Gastrocnemius medialis (tissue), 4 donors: ENCODE measurements at regions of chr12 and their contacts with region 1.

Region 1: GRCh38 chr12:122413516-122414404 is 8.7 kb downstream of the CLIP1 start:
- DNase-seq: no peak
- ATAC-seq: peak; percentile 48 to 80
- H3K4me3 ChIP-seq: peak overlapping the region in 3 of 4 donors; percentile 5 to 30 (median 7)
- H3K27ac ChIP-seq: peak overlapping the region; percentile 76 to 100 (median 90)
- H3K4me1 ChIP-seq: peaks cover 46 to 68% of the 10 kb centered on the region in 2 donors
- H3K27me3 ChIP-seq: no peaks in the 10 kb centered on the region
- CTCF ChIP-seq: no peak
- POLR2A ChIP-seq: no peak

Region 2: GRCh38 chr12:122345042-122345441 is 68.7 kb before region 1 on chr12:
- in situ Hi-C with region 1: no loop called
- intact Hi-C with region 1: no loop called
- DNase-seq: no peak
- ATAC-seq: no peak
- H3K4me3 ChIP-seq: no peak overlapping the region
- H3K27ac ChIP-seq: peak overlapping the region in 1 of 4 donors; percentile 18
- H3K4me1 ChIP-seq: peaks cover 0 to 1% of the 10 kb centered on the region in 2 donors
- H3K27me3 ChIP-seq: no peaks in the 10 kb centered on the region
- CTCF ChIP-seq: no peak
- POLR2A ChIP-seq: no peak

Region 3: GRCh38 chr12:122366685-122367475 is 46.9 kb before region 1 on chr12:
- in situ Hi-C with region 1: loop called in 1 of 4 experiments (anchors 10 kb)
- intact Hi-C with region 1: no loop called
- DNase-seq: peak; percentile 79 to 85
- ATAC-seq: peak; percentile 83 to 94
- H3K4me3 ChIP-seq: no peak overlapping the region
- H3K27ac ChIP-seq: peak overlapping the region; percentile 88 to 99 (median 96)
- H3K4me1 ChIP-seq: peaks cover 79 to 90% of the 10 kb centered on the region in 2 donors
- H3K27me3 ChIP-seq: no peaks in the 10 kb centered on the region
- CTCF ChIP-seq: no peak
- POLR2A ChIP-seq: peak in 1 of 2 donors; percentile 42